Gastrocnemius medialis (tissue), 4 donors: ENCODE measurements at regions of chr22 and their contacts with region 1.

Region 1: DNA sequence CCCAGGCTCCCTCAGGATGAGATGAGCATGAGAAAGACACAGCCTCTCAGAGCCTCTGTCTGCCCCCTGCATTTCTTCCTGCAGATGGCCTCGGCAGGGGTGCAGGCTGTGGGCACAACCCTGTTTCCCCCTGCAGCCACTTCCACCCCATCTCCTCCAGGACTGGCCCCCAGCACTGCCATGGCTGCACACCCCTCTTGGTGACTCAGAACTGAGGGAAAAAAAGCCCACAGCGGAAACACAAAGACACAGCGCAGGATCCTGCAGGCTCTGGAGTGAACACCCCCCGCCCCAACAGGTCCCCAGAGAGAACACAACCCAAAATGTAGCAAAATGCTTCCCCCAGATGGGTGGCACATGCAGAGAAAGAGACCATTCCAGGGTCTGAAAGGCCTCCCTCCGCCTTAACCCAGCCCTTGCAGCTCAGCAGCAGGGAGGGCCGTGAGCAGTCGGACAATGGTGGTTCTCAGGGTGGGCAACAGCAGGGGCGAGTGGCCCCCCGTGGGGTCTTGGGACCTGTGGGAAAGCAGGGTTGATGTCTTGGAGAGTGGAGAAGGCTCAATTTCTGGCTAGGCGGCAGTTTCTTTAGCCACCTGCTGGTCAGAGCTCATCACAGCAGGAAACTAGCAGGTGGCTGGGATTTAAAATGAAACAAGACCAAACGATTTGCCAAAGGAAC is 8.0 kb downstream of the TUBGCP6 start:
- DNase-seq: no peak
- ATAC-seq: no peak
- H3K4me3 ChIP-seq: no peak overlapping the region
- H3K27ac ChIP-seq: no peak overlapping the region
- H3K4me1 ChIP-seq: peaks cover 7 to 8% of the 10 kb centered on the region in 2 donors
- H3K27me3 ChIP-seq: no peaks in the 10 kb centered on the region
- CTCF ChIP-seq: peak in 2 of 5 experiments; percentile 15 to 18
- POLR2A ChIP-seq: no peak

Region 2: DNA sequence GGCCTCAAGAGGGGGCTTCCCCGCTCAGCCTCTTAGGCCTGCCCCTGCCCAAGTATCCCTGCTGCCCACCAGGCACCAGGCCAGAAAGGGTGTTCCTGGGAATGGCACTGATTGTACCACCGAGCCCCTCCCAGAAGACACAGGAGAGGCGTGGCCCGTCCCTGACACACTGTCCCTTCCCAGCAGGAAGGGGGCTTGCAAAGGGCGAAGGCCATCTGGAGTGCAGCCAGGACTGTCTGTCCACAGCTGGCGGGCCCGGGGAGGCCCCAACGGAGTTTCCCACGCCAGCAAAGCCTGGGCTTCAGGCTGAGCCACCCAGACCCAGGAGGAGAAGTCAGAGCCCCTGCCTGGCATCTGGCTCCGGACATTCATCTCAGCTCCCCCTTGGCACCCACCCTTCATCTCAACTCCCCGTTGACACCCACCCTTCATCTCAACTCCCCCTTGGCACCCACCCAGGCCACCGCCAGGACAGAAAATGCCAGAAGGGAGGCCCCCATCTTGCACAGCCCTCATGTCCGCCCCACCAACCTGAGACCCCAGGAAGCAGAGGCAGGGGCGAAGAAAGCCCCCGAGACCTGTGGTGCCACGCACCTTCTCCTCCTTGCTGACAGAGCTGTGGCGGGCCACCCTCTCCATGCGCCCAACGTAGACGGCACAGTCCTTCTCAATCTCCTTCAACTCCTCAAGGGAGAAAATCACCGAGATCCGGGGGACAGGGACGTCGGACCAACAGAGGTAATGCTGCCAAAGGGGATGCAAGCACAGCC is 11.5 kb before region 1 on chr22:
- in situ Hi-C with region 1: no loop called
- intact Hi-C with region 1: loop called (anchors 2 kb)
- DNase-seq: no peak
- ATAC-seq: no peak
- H3K4me3 ChIP-seq: no peak overlapping the region
- H3K27ac ChIP-seq: no peak overlapping the region
- H3K4me1 ChIP-seq: no peaks in the 10 kb centered on the region
- H3K27me3 ChIP-seq: no peaks in the 10 kb centered on the region
- CTCF ChIP-seq: no peak
- POLR2A ChIP-seq: no peak

Region 3: GRCh38 chr22:50260801-50261614 is 24.1 kb after region 1 on chr22:
- in situ Hi-C with region 1: no loop called
- intact Hi-C with region 1: no loop called
- DNase-seq: peak in 1 of 2 donors; percentile 46
- ATAC-seq: peak in 1 of 2 donors; percentile 2
- H3K4me3 ChIP-seq: peak overlapping the region; percentile 67 to 85 (median 72)
- H3K27ac ChIP-seq: peak overlapping the region; percentile 93 to 99 (median 98)
- H3K4me1 ChIP-seq: peaks cover 40 to 62% of the 10 kb centered on the region in 2 donors
- H3K27me3 ChIP-seq: no peaks in the 10 kb centered on the region
- CTCF ChIP-seq: no peak
- POLR2A ChIP-seq: no peak

Region 4: DNA sequence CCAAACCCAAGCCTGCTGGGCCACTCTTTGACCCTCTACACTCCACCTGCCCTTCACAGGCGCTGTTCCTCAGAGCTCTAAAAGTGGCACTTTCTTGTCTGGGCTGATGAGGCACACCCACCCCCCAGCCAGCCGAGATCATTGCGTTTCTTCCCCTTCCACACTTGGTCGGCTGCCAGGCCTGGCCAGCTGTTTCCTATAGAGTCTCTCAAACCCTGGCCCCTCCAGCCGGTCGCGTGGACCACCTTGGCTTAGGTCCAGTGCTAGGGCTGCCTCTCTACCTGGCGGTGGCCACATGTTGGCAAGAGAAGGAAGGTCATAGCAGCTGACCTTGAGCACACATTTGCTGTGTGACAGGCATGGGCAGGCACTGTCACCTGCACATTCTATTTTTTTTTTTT is 166.8 kb after region 1 on chr22:
- in situ Hi-C with region 1: no loop called
- intact Hi-C with region 1: no loop called
- DNase-seq: peak; percentile 17 to 50
- ATAC-seq: no peak
- H3K4me3 ChIP-seq: no peak overlapping the region
- H3K27ac ChIP-seq: peak overlapping the region in 2 of 4 donors; percentile 7 to 38
- H3K4me1 ChIP-seq: peaks cover 10 to 21% of the 10 kb centered on the region in 2 donors
- H3K27me3 ChIP-seq: no peaks in the 10 kb centered on the region
- CTCF ChIP-seq: no peak
- POLR2A ChIP-seq: no peak

Region 5: DNA sequence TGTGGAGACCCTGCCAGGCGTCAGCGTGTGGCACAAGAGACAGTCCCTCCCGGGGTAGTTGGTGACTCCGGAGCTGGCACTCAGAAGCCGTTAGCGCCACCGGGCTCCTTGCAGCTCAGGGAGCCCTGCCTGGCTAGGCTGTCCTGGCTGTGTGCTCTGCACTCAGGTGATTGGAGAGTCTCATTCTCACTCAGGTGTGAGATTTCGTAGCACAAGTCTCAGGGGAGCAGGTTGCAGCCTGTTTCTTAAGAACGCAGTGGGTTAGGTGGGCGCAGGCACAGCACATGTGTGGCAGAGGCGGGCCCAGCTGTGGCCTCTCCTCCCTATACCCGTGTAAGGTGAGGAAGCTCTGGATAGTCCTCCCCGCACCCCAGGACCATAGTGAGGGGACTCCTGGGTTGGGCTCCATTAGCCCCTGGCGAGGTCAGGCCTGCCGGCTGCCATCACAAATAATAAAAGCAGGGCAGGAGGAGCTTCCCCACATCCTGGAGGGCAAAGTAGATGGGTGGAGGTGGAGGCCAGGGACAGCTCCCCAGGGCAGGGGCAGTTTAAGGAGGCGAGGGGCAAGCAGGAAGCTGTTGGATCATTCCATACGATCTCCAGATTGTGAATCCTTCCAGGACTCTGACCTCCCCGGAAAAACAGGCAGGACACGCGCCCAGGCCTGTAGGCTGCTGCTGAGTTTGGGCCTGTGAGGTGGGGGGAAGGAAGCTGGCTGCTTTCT is 198.6 kb after region 1 on chr22:
- in situ Hi-C with region 1: no loop called
- intact Hi-C with region 1: loop called (anchors 10 kb)
- DNase-seq: no peak
- ATAC-seq: no peak
- H3K4me3 ChIP-seq: no peak overlapping the region
- H3K27ac ChIP-seq: no peak overlapping the region
- H3K4me1 ChIP-seq: no peaks in the 10 kb centered on the region
- H3K27me3 ChIP-seq: no peaks in the 10 kb centered on the region
- CTCF ChIP-seq: no peak
- POLR2A ChIP-seq: no peak